ENCODE measurements at regions of chr2 and their contacts with region 1.

Region 1: GRCh38 chr2:130288461-130289403 is 54.0 kb upstream of the IMP4 start:
- DNase-seq: peak; percentile 83
- ATAC-seq: peak; percentile 90
- H3K4me3 Mint-ChIP-seq: peak overlapping the region; percentile 49
- H3K27ac Mint-ChIP-seq: no peak overlapping the region
- H3K4me1 Mint-ChIP-seq: peaks cover 4% of the 10 kb centered on the region; the same call in 1 of the 2 replicates
- H3K27me3 Mint-ChIP-seq: peaks cover 23% of the 10 kb centered on the region
- CTCF ChIP-seq: no peak

Region 2: DNA sequence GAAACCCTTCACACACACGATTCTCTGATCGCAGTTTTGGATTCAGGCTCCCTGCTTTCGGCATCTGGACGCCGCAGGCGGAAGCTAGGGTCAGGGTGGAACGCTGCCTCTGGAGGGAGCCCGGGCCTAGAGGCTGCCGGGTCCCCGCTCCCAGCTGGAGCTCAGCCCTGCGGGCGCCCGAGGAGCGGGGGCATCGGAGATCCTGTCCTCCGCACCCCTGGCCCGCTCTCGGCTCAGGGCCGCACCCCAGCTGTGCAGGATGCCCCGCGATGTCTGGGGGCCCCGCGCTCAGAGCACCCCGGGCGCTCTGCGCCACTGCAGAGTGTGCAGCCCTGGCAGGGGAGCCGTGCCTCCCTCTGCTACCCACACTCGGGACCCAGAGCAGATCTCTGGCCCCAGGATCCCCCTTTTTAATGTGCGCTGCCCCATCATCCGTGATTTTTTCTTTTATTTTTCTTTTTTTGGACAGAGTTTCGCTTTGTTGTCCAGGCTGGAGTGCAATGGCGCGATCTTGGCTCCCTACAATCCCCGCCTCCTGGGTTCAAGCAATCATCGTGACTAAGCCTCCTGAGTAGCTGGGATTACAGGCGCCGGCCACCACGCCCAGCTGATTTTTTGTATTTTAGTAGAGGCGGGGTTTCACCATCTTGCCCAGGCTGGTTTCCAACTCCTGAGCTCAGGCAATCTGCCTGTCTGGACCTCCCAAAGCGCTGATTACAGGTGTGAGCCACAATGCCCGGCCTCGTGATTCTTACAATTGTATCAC is 35.7 kb before region 1 on chr2:
- CTCF ChIA-PET with region 1: interaction called, 21 read pairs
- POLR2A ChIA-PET with region 1: no interaction called
- DNase-seq: no peak
- ATAC-seq: peak; percentile 61
- H3K4me3 Mint-ChIP-seq: peak overlapping the region; percentile 76
- H3K27ac Mint-ChIP-seq: no peak overlapping the region
- H3K4me1 Mint-ChIP-seq: peaks cover 3% of the 10 kb centered on the region; the same call in 1 of the 2 replicates
- H3K27me3 Mint-ChIP-seq: peaks cover 55% of the 10 kb centered on the region
- CTCF ChIP-seq: no peak

Region 3: GRCh38 chr2:130316596-130316995 is 27.9 kb after region 1 on chr2:
- CTCF ChIA-PET with region 1: interaction called, 13 read pairs
- POLR2A ChIA-PET with region 1: no interaction called
- DNase-seq: no peak
- ATAC-seq: no peak
- H3K4me3 Mint-ChIP-seq: no peak overlapping the region
- H3K27ac Mint-ChIP-seq: no peak overlapping the region
- H3K4me1 Mint-ChIP-seq: no peaks in the 10 kb centered on the region
- H3K27me3 Mint-ChIP-seq: no peaks in the 10 kb centered on the region
- CTCF ChIP-seq: no peak

Region 4: DNA sequence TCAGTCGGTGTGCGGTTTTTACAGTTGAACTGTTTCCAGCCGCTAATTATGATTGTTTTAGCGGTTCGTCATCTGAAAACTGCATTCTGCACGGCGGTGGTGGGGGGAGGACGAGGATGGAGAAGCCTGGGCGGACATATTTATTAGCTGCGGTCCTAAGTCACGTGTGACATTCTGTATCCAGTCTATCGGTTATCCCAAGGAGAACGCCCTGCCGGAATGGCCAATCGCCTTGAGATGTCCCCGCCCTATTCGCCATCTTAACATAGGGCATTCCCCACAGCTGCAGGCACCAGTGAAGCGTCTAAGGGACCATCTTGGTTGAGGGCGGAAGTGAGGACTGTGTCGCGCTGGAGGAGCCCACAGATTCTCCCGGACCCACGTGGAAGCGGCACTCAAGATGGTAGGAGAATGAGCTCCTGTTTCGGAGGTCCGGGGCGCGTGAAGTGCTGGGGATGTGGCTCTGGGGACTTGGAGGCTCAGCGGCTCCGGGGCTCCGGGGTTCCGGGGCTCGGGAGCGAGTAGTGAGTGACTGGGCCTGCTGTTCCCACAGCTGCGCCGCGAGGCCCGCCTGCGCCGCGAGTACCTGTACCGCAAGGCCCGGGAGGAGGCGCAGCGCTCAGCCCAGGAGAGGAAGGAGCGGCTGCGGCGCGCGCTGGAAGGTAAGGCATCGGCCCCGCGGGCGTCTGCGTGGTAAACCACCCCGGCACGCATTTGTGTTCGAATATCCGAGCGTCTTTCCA is 54.0 kb after region 1 on chr2 and contains the start of gene IMP4:
- CTCF ChIA-PET with region 1: interaction called, 25 read pairs
- POLR2A ChIA-PET with region 1: no interaction called
- DNase-seq: peak; percentile 94
- ATAC-seq: peak; percentile 89
- H3K4me3 Mint-ChIP-seq: peak within 1 kb of the TSS; percentile 100
- H3K27ac Mint-ChIP-seq: peak within 1 kb of the TSS; percentile 98
- H3K4me1 Mint-ChIP-seq: peaks cover 13% of the 10 kb centered on the region
- H3K27me3 Mint-ChIP-seq: no peaks in the 10 kb centered on the region
- CTCF ChIP-seq: no peak
- total RNA-seq, gene IMP4: 80.4 to 89.2 TPM (median 85.2 TPM) in 3 replicates

Region 5: DNA sequence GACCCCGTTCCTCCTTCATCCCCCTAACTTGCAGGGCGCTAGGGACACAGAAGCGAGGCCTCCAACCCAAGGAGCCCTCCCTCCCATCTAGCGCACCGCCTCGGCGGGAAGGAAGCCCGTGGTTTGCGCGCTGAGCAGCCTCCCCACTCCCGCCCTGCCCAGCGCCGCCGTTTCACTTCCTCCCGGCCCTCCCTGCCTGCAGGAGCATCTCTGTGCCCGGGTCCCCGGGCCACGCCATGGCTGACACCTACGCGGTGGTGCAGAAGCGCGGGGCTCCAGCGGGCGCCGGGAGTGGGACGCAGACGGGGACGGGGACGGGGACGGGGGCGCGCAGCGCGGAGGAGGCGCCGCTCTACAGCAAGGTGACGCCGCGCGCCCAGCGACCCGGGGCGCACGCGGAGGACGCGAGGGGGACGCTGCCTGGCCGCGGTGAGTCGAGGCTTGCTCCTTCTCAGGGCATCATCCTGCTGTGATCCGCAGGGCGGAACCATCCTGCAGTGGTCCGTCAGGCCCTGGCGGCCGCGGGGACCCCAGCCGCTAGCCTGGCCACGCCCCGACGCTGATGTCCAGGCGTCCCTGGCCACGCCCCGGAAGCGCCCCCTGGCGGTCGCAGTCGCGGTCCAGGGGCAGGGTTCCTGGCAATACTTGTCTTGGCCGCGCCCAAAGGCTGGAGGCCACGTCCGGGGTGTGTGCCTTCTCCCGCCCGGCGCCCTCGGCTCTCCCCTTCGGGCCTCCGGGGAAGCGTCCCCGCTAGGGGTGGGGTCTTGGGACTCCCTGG is 83.5 kb after region 1 on chr2:
- CTCF ChIA-PET with region 1: interaction called, 11 read pairs
- POLR2A ChIA-PET with region 1: no interaction called
- DNase-seq: peak; percentile 92
- ATAC-seq: peak; percentile 89
- H3K4me3 Mint-ChIP-seq: peak overlapping the region; percentile 83
- H3K27ac Mint-ChIP-seq: no peak overlapping the region; the same call in 1 of the 2 replicates
- H3K4me1 Mint-ChIP-seq: peaks cover 32% of the 10 kb centered on the region
- H3K27me3 Mint-ChIP-seq: peaks cover 4% of the 10 kb centered on the region
- CTCF ChIP-seq: peak; percentile 93